ENCODE measurements at regions of chr1 and their contacts with region 1.

Region 1: GRCh38 chr1:84223751-84224432 is 77.6 kb upstream of the SAMD13 start:
- DNase-seq: no peak
- H3K4me3 ChIP-seq: no peak overlapping the region
- H3K27ac ChIP-seq: no peak overlapping the region
- H3K4me1 ChIP-seq: no peaks in the 10 kb centered on the region
- H3K27me3 ChIP-seq: no peaks in the 10 kb centered on the region
- CTCF ChIP-seq: no peak
- POLR2A ChIP-seq: no peak

Region 2: GRCh38 chr1:83125456-83125855 is 1098.4 kb before region 1 on chr1:
- intact Hi-C with region 1: loop called (anchors 10 kb)
- DNase-seq: no peak
- H3K4me3 ChIP-seq: no peak overlapping the region
- H3K27ac ChIP-seq: no peak overlapping the region
- H3K4me1 ChIP-seq: no peaks in the 10 kb centered on the region
- H3K27me3 ChIP-seq: no peaks in the 10 kb centered on the region
- CTCF ChIP-seq: no peak
- POLR2A ChIP-seq: no peak

Region 3: GRCh38 chr1:84809023-84809422 is 585.1 kb after region 1 on chr1:
- intact Hi-C with region 1: loop called (anchors 5 kb)
- DNase-seq: no peak
- H3K4me3 ChIP-seq: no peak overlapping the region
- H3K27ac ChIP-seq: no peak overlapping the region
- H3K4me1 ChIP-seq: no peaks in the 10 kb centered on the region
- H3K27me3 ChIP-seq: no peaks in the 10 kb centered on the region
- CTCF ChIP-seq: no peak
- POLR2A ChIP-seq: no peak

Measured in breast epithelium (tissue), 4 donors.